ENCODE measurements at regions of chr17 and their contacts with region 1.

Region 1: GRCh38 chr17:29617125-29617480 is 5.6 kb downstream of the CORO6 start:
- DNase-seq: peak; percentile 83 to 92 (median 87)
- H3K4me3 ChIP-seq: peak overlapping the region; percentile 72
- H3K4me3 Mint-ChIP-seq: peak overlapping the region; percentile 91 to 97 (median 93)
- H3K27ac ChIP-seq: peak overlapping the region; percentile 75
- H3K27ac Mint-ChIP-seq: peak overlapping the region in 7 of 8 donors; percentile 42 to 89 (median 67)
- H3K4me1 ChIP-seq: peaks cover 44% of the 10 kb centered on the region
- H3K4me1 Mint-ChIP-seq: peaks cover 36 to 55% (median 40%) of the 10 kb centered on the region in 3 donors
- H3K27me3 ChIP-seq: no peaks in the 10 kb centered on the region
- H3K27me3 Mint-ChIP-seq: no peaks in the 10 kb centered on the region

Region 2: DNA sequence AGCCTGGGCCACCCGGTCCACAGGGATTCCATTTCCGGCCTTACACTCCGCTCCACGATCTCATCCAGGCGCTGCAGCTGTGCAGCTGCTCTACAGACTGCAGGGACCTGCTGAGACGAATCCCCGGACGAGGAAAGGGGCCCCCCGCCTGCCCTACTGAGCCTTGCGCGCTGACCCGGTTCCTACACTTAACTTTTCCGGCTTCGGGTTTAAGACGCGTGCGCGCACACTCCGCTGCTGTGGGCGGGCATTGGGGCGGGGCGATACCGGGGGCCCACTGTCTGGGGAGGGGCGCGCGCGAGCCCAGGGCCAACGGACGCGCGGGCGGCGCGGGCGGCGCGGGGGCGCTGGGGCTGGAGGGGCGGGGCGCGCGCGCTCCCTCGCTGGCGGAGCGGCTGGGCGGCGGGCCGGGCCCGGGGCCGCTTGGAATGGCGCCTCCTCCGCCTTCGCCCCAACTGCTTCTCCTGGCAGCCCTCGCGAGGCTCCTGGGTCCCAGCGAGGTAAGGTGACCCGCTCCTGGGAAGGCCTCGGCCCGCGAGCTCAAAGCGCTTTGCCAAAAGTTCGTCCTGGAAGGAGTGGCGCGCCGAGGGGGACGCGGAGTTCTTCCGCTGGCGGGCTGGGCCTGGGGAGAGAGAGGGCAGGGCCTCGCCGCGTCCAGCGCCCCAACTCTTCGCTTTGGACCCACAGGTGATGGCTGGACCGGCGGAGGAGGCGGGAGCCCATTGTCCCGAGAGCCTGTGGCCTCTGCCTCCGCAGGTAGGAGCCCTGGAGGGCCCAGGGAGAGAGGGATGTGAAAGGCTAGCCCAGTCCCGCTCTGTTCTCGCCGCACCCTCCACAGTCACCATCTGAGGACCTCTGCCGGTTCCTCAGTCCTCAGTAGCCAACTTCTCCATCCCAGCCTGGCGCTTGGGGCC is 48.5 kb before region 1 on chr17 and contains the start of gene TP53I13:
- CTCF ChIA-PET with region 1: interaction called, 436 read pairs
- POLR2A ChIA-PET with region 1: interaction called, 18 read pairs
- DNase-seq: peak; percentile 78 to 92 (median 83)
- H3K4me3 ChIP-seq: peak within 1 kb of the TSS; percentile 59
- H3K4me3 Mint-ChIP-seq: peak within 1 kb of the TSS; percentile 91 to 99 (median 97)
- H3K27ac ChIP-seq: peak within 1 kb of the TSS; percentile 63
- H3K27ac Mint-ChIP-seq: peak within 1 kb of the TSS; percentile 81 to 98 (median 94)
- H3K4me1 ChIP-seq: peaks cover 25% of the 10 kb centered on the region
- H3K4me1 Mint-ChIP-seq: peaks cover 31 to 45% (median 38%) of the 10 kb centered on the region in 3 donors
- H3K27me3 ChIP-seq: no peaks in the 10 kb centered on the region
- H3K27me3 Mint-ChIP-seq: no peaks in the 10 kb centered on the region
- total RNA-seq, gene TP53I13: 71.3 to 75.5 TPM

Region 3: GRCh38 chr17:29597361-29598172 is 19.5 kb before region 1 on chr17:
- CTCF ChIA-PET with region 1: interaction called, 108 read pairs
- POLR2A ChIA-PET with region 1: interaction called, 20 read pairs
- DNase-seq: no peak
- H3K4me3 ChIP-seq: no peak overlapping the region
- H3K4me3 Mint-ChIP-seq: peak overlapping the region in 2 of 7 donors; percentile 40 to 54
- H3K27ac ChIP-seq: no peak overlapping the region
- H3K27ac Mint-ChIP-seq: no peak overlapping the region
- H3K4me1 ChIP-seq: peaks cover 11% of the 10 kb centered on the region
- H3K4me1 Mint-ChIP-seq: peaks cover 7 to 11% (median 8%) of the 10 kb centered on the region in 3 donors
- H3K27me3 ChIP-seq: no peaks in the 10 kb centered on the region
- H3K27me3 Mint-ChIP-seq: no peaks in the 10 kb centered on the region

Region 4: DNA sequence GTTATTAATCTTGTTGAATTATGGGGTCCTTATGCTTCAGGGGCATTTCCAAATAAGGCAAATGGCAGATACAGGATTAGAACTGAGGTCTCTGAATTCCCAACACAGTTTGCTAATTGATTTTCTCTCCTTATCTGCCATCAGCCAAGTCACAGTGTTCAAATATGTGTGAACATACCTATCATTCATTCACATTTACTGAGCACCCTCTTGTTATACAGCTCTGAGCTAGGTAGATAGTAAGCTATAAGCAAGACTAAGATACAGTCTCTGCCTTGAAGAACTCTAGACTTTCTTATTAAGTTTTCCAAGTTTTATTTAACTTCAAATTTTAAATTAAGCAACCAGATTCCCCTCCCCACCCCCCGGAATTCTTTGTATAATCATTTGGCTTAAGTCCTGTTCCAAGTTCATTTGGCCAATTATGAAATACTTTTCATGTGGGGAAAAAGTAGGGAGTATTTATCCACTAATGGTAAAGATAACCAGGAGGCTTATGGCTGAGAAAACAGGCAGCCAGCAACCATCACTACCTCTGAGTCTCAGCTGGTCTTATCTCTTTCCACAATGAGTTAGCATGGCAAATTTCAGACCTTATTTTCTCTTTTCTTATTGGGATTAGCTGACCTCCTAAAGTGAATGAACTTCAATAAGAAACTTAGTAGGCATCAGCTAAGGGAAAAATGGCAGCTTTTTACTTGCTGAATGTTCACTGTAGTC is 37.1 kb after region 1 on chr17:
- CTCF ChIA-PET with region 1: interaction called, 13 read pairs
- POLR2A ChIA-PET with region 1: no interaction called
- DNase-seq: no peak
- H3K4me3 ChIP-seq: no peak overlapping the region
- H3K4me3 Mint-ChIP-seq: no peak overlapping the region
- H3K27ac ChIP-seq: no peak overlapping the region
- H3K27ac Mint-ChIP-seq: peak overlapping the region in 2 of 8 donors; percentile 26 to 50
- H3K4me1 ChIP-seq: no peaks in the 10 kb centered on the region
- H3K4me1 Mint-ChIP-seq: peaks cover 4 to 7% (median 4%) of the 10 kb centered on the region in 3 donors
- H3K27me3 ChIP-seq: no peaks in the 10 kb centered on the region
- H3K27me3 Mint-ChIP-seq: no peaks in the 10 kb centered on the region

Region 5: GRCh38 chr17:29722411-29723198 is 105.5 kb after region 1 on chr17:
- CTCF ChIA-PET with region 1: interaction called, 13 read pairs
- POLR2A ChIA-PET with region 1: no interaction called
- DNase-seq: peak; percentile 5 to 68 (median 53)
- H3K4me3 ChIP-seq: peak overlapping the region; percentile 32
- H3K4me3 Mint-ChIP-seq: peak overlapping the region; percentile 53 to 79 (median 70)
- H3K27ac ChIP-seq: peak overlapping the region; percentile 49
- H3K27ac Mint-ChIP-seq: peak overlapping the region; percentile 72 to 96 (median 88)
- H3K4me1 ChIP-seq: peaks cover 77% of the 10 kb centered on the region
- H3K4me1 Mint-ChIP-seq: peaks cover 76 to 92% (median 91%) of the 10 kb centered on the region in 3 donors
- H3K27me3 ChIP-seq: no peaks in the 10 kb centered on the region
- H3K27me3 Mint-ChIP-seq: no peaks in the 10 kb centered on the region

Region 6: DNA sequence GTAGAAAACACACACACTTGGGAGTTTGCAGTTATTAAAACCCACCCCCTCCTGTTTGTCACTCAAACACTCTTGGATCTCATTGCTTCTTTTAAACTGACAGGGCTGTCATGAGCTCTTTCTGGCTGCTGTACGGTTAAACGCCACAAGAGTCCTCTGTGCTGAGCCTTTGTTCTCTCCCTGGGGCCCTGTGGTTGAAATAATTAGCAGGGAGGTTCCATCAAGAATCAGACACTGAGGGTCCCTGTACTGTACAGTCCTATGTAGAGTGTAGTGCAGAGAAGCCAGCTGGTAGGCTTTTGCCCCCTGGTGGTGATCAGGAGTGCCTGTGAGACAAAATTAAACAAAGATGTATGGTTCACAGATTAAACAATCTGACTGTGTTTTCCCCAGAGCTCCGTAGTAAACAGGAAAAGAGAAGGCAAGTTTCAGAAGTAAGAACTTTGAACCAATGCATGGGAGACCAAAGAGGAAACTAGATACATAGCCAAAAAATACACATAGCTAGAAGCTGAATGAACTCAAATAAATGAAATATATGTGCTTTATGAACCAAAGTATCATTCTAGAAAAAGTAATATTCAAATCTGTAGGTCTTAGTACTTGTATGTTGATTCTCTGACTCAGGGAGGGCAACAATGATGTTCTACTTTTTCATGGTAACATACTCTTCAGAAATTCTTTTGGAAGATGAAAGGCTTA is 314.3 kb after region 1 on chr17:
- CTCF ChIA-PET with region 1: interaction called, 27 read pairs
- POLR2A ChIA-PET with region 1: interaction called, 9 read pairs
- DNase-seq: peak; percentile 50 to 84 (median 77)
- H3K4me3 ChIP-seq: peak overlapping the region; percentile 73
- H3K4me3 Mint-ChIP-seq: no peak overlapping the region
- H3K27ac ChIP-seq: no peak overlapping the region
- H3K27ac Mint-ChIP-seq: no peak overlapping the region
- H3K4me1 ChIP-seq: peaks cover 39% of the 10 kb centered on the region
- H3K4me1 Mint-ChIP-seq: peaks cover 29 to 33% (median 30%) of the 10 kb centered on the region in 3 donors
- H3K27me3 ChIP-seq: no peaks in the 10 kb centered on the region
- H3K27me3 Mint-ChIP-seq: peaks cover 0 to 1% of the 10 kb centered on the region in 2 donors